ENCODE measurements at regions of chr14 and their contacts with region 1.

Region 1: GRCh38 chr14:75654127-75654732 is 6.4 kb downstream of the ERG28 start:
- DNase-seq: no peak
- H3K4me3 ChIP-seq: no peak overlapping the region
- CTCF ChIP-seq: peak; percentile 92

Region 2: DNA sequence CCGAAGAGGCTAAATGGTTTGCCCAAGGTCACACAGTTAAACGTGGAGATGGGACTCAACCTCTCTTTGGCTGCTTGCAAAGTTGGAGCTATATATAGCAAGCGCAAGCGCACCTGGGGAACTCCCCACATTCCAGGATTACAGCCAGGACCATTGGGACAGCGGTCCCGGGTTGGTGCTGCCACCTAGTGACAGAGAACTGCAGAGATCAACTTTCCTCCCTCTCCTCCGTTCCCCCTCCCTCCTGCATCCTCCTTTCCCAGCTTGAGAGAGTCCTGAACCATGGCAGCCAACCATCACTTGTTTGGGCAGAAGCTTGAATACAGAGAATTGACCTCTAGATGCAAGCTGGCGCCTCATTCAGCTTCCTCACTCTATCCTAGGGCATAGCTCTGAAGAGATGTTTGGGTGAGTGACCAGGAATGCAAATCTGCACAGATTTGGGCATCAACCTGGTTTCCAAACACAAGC is 93.2 kb before region 1 on chr14:
- CTCF ChIA-PET with region 1: interaction called, 50 read pairs
- POLR2A ChIA-PET with region 1: no interaction called
- DNase-seq: no peak
- H3K4me3 ChIP-seq: no peak overlapping the region
- CTCF ChIP-seq: peak; percentile 86

Region 3: GRCh38 chr14:75604856-75605851 is 49.1 kb before region 1 on chr14:
- CTCF ChIA-PET with region 1: interaction called, 12 read pairs
- POLR2A ChIA-PET with region 1: no interaction called
- DNase-seq: no peak
- H3K4me3 ChIP-seq: no peak overlapping the region
- CTCF ChIP-seq: no peak

Region 4: GRCh38 chr14:75619548-75619947 is 34.7 kb before region 1 on chr14:
- CTCF ChIA-PET with region 1: interaction called, 17 read pairs
- POLR2A ChIA-PET with region 1: no interaction called
- DNase-seq: no peak
- H3K4me3 ChIP-seq: no peak overlapping the region
- CTCF ChIP-seq: no peak

Region 5: GRCh38 chr14:75625034-75625433 is 29.2 kb before region 1 on chr14:
- CTCF ChIA-PET with region 1: interaction called, 17 read pairs
- POLR2A ChIA-PET with region 1: no interaction called
- DNase-seq: no peak
- H3K4me3 ChIP-seq: no peak overlapping the region
- CTCF ChIP-seq: no peak

Region 6: DNA sequence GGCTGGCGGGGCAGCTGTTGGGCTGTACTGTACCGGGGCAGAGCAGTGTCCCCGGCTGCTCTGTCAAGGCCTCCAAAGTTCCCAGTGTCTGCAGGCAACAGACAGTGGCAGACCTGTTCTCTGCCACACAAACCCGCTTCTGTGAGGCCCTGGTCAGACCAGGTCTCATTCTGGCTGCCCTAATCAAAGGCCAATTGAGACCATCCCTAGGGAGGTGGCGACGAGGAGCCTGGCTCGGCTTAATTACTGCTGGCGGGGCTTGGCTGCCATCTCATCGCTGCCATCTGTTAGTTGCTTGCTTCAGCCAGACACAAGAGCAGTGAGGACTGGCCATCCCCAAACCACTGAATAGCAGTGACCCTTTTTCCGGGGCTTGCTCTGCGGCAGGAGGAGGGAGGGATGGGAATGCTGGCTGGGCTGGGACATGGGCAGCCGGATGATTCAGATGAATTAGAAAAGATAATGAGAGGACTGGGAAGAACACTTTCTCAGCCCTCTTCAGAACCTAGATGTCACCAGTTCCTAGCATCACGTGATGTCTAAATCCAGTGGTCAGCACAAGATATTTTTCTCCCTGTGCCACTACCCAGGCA is 18.0 kb before region 1 on chr14:
- CTCF ChIA-PET with region 1: interaction called, 19 read pairs
- POLR2A ChIA-PET with region 1: no interaction called
- DNase-seq: no peak
- H3K4me3 ChIP-seq: no peak overlapping the region
- CTCF ChIP-seq: no peak

Region 7: DNA sequence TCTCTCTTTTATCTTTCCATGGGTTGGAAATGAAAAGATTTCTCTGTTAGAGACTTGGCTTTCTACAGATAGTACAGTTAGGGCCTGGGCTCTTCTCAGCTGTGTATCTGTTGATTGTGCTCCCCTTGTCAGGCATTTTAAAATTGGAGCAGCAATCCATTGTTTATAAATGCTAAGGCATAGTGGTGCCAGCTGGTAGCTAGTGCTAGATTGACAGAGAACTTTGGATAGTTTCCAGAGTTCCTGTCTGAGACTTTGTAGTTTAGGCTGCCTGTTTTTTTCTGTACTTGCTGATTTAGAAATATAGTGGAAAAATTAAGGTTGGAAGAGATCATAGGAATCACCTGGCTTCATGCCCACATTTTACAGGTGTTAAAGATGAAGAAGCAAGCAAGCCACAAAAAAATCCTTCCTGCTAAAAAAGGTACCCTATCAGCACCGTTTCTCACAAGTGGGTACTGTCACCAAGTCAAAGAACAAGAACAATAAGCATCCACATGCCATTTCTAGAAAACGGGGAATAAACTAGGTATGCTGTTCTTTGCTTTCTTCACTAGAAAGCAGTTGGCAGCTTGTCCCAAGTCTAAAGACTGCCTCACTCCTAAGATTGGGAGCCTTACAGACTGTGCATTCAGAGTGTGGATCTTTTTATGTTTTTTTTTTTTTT is 13.0 kb after region 1 on chr14:
- CTCF ChIA-PET with region 1: interaction called, 18 read pairs
- POLR2A ChIA-PET with region 1: no interaction called
- DNase-seq: no peak
- H3K4me3 ChIP-seq: no peak overlapping the region
- CTCF ChIP-seq: no peak

Region 8: GRCh38 chr14:75752907-75753594 is 98.8 kb after region 1 on chr14:
- CTCF ChIA-PET with region 1: no interaction called
- POLR2A ChIA-PET with region 1: no interaction called
- DNase-seq: no peak
- H3K4me3 ChIP-seq: no peak overlapping the region
- CTCF ChIP-seq: no peak